CD8-positive, alpha-beta T cell (primary cell): ENCODE measurements at regions of chr15 and their contacts with region 1.

Region 1: DNA sequence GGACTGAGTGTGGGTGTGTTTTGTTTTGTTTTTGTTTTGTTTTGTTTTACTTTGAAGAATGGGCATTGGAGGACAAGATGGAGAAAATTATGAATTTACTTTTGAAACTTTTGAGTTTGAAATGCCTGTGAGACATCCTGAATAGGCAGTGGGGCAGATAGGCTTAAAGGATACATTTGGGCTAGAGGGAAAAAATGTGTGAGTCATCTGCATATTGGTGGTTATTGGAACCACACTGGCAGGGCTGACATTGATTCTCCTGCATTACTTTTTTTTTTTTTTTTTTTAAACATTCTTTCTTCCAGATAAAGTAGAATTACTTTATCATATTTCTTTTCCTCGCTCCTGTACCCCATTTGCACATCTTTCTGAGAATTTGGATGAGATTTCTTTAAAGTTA is 56.1 kb downstream of the CALML4 start:
- DNase-seq: no peak
- ATAC-seq: no peak
- H3K4me3 ChIP-seq: no peak overlapping the region
- H3K4me3 Mint-ChIP-seq: no peak overlapping the region
- H3K27ac ChIP-seq: no peak overlapping the region
- H3K27ac Mint-ChIP-seq: peak overlapping the region; percentile 10
- H3K4me1 ChIP-seq: no peaks in the 10 kb centered on the region
- H3K4me1 Mint-ChIP-seq: peaks cover 14% of the 10 kb centered on the region
- H3K27me3 ChIP-seq: no peaks in the 10 kb centered on the region
- H3K27me3 Mint-ChIP-seq: no peaks in the 10 kb centered on the region
- CTCF ChIP-seq: no peak

Region 2: GRCh38 chr15:68097029-68097428 is 52.0 kb before region 1 on chr15:
- CTCF ChIA-PET with region 1: no interaction called
- POLR2A ChIA-PET with region 1: no interaction called
- intact Hi-C with region 1: loop called in 1 of 2 experiments (anchors 10 kb)
- DNase-seq: no peak
- ATAC-seq: no peak
- H3K4me3 ChIP-seq: no peak overlapping the region
- H3K4me3 Mint-ChIP-seq: no peak overlapping the region
- H3K27ac ChIP-seq: no peak overlapping the region
- H3K27ac Mint-ChIP-seq: no peak overlapping the region
- H3K4me1 ChIP-seq: peaks cover 16% of the 10 kb centered on the region
- H3K4me1 Mint-ChIP-seq: peaks cover 55% of the 10 kb centered on the region
- H3K27me3 ChIP-seq: no peaks in the 10 kb centered on the region
- H3K27me3 Mint-ChIP-seq: no peaks in the 10 kb centered on the region
- CTCF ChIP-seq: no peak